Activated T-helper 1 cell treated with anti-CD3 and anti-CD28 coated beads, Interleukin-12 subunit alpha, Interleukin-12 subunit beta, Interleukin-2, Interleukin-4 antibody, amounts not matched to agents 30 ng/mL and 10 ng/mL and 1 ng/mL, durations not matched to agents 14 hours and 24 hours and 36 hours (primary cell): ENCODE measurements at regions of chr7 and their contacts with region 1.

Region 1: DNA sequence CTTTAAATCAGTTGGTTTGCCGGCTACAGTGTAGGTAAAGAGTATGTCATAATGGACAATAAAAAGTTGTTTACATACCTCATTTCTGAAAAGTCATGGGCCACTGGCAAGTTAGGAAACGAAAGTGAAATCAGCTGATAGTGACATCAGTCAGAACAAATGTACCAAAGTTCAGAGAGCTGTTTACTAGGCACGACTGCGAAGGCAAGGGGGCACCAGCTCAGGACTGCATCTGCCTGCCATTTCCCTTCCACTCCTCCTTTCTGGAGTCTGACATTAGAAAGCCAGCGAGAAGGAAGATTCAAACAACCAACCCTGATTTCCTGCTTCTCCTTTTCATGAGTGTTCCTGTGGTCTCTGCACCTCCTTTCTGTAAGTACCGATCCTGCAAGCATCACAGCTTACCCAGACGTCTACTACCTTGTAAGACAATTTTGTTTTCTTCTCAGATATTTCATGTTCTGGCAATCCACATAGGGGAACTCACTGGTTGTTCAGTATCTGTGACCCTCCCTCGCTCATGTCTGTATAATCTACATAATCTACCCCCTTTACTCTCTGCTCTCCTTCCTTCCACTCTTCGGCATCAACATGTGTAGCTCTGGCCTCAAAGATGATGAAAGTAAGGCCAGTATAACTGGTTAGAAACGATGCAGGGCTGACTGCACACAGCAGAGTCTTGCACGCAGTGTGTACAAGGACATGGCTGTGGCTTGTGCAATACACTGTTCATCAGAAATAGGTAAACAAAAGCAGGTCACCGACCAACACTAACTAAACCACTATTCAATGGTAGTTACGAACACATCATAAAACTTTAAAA is at the start of gene TMEM140:
- DNase-seq: peak; percentile 61
- H3K4me3 Mint-ChIP-seq: peak within 1 kb of the TSS; percentile 88
- H3K27ac Mint-ChIP-seq: peak within 1 kb of the TSS; percentile 96
- H3K4me1 Mint-ChIP-seq: peaks cover 60% of the 10 kb centered on the region
- H3K27me3 Mint-ChIP-seq: no peaks in the 10 kb centered on the region
- total RNA-seq, gene TMEM140: 2.9 and 4.5 TPM in 2 replicates

Region 2: DNA sequence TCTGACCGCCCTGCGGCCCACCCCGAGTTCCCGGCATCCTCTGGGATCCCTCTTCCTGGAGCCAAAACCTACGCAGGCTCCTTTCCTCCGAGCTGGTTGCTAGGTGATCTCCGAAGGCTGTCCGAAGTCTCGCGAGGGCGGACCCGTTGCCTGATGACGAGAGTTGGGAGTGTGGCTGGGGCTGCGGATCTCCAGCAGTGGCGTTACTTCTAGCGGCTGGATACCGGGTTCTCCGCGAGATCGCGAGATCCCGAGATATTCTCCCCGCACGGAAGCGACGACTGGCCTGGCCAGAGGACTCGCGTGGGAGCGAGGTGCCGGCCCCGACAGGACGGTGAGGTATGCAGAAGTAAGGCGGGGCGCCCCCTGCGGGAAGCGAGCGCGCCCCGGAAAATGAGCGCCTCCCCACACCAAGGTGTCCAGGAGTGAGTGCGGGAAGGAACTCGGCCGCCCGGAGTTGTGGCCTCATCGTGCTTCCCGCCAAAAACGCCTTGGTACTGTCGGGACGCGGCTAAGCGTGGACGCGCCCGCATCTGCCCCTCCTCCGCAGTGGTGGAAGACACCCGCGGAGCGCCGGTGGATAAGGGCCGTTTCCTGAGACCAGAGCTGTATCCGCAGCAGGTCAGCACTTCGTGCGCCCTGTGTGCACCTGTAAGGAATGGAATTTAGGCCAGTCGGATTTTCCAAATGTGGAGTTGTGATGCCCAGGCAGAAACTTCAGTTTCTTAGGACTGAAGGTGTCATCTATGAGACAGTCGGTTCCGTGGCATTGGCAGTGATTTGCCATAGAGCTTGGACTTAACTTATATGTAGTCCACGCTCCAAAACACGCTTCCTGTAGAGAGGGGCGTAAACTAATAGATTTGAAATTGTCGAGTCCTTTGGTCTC is 161.5 kb before region 1 on chr7 and contains the start of gene AGBL3:
- intact Hi-C with region 1: loop called (anchors 1 kb)
- DNase-seq: peak; percentile 87
- H3K4me3 Mint-ChIP-seq: peak within 1 kb of the TSS; percentile 97
- H3K27ac Mint-ChIP-seq: peak within 1 kb of the TSS; percentile 86
- H3K4me1 Mint-ChIP-seq: peaks cover 49% of the 10 kb centered on the region
- H3K27me3 Mint-ChIP-seq: no peaks in the 10 kb centered on the region
- total RNA-seq, gene AGBL3: 1.5 and 1.9 TPM in 2 replicates

Region 3: DNA sequence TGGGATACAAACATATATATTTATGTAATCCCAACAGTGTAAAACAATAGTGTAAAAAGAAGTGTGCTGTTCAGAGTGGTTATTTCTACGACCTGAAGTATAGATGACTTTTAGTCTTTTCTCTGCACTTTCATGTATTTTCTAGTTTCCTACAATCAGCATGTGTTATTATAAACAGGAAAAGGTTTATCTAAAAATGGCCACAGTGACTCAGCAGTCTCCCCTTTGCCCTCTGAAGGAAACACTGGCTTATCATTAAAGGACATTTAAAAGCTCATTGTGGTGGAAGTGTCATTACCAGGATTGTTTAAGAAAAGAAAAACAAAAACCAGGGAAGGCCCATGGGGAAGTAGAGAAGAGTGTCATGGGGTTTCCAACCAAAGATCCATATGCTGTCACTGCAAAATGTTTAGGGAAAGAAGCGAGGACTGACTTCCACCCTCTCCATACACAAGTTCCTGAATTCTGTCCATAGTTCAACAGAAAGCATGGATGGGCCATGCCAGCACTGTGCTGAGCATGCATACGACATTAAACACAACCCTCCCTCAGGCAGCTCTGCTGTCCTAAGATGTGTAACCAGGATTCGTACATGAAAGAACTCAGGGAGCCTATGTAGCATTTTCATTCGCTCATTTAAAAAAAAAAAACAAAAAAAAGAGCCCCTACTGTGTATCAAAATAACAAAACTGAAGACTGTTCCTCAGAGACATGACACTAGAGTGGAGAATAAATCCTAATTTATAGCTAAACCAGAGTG is 12.2 kb after region 1 on chr7:
- intact Hi-C with region 1: loop called (anchors 1 kb)
- DNase-seq: no peak
- H3K4me3 Mint-ChIP-seq: peak overlapping the region; percentile 47
- H3K27ac Mint-ChIP-seq: peak overlapping the region; percentile 94
- H3K4me1 Mint-ChIP-seq: peaks cover 38% of the 10 kb centered on the region
- H3K27me3 Mint-ChIP-seq: no peaks in the 10 kb centered on the region

Region 4: GRCh38 chr7:135274495-135275268 is 126.6 kb after region 1 on chr7:
- intact Hi-C with region 1: no loop called
- DNase-seq: peak; percentile 57
- H3K4me3 Mint-ChIP-seq: no peak overlapping the region
- H3K27ac Mint-ChIP-seq: no peak overlapping the region
- H3K4me1 Mint-ChIP-seq: no peaks in the 10 kb centered on the region
- H3K27me3 Mint-ChIP-seq: peaks cover 2% of the 10 kb centered on the region